Activated CD4-positive, alpha-beta T cell treated with anti-CD3 and anti-CD28 coated beads for 36 hours (primary cell): ENCODE measurements at regions of chr2 and their contacts with region 1.

Region 1: DNA sequence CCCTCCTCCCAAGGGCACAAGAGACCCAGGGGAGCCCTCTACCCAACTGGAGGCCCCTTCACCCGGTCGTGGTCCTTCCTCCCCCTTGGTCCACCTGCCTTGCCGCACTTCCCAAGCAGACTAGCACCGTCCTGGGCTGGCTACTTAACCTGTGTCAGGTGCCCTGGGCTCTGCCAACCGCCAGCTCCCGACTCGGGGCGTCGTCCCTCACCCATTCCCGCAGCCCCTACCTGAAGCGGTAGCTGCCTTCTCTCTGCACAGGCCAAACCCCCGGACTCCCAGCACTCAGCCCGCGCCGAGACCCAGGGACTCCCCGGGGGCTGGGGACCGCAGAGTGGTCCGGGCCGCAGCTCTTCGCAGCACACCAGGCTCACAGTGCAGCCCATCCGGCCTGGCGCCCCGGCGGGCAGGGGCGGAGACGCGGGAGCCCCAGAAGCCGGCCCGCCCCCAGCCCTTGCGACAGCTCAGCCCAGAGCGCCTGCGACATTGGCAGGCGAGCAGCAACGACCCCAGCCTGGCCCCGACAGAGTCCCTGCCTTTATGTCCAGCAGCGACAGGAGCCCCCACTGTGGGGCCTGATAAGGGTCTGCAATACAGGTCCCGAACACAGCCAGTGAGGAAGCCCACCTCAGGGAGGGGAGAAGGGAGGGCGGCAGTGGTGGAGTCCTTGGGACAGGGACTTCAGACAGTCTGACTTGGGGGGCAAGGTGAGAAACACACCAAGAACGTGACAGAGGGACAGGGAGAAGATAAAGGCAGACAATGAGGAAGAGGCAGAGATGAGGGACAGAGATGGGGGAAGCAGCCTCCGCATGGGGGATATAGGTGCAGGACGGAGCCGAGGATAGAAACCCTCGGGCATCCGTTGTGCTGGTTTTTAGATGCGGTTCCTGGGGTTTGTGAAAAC is 31.0 kb upstream of the TNS1 start:
- DNase-seq: no peak
- ATAC-seq: peak; percentile 12
- H3K4me3 Mint-ChIP-seq: peak overlapping the region; percentile 54
- H3K27ac Mint-ChIP-seq: no peak overlapping the region
- H3K4me1 Mint-ChIP-seq: peaks cover 8% of the 10 kb centered on the region
- H3K27me3 Mint-ChIP-seq: peaks cover 2% of the 10 kb centered on the region

Region 2: GRCh38 chr2:217956586-217957457 is 77.0 kb before region 1 on chr2:
- CTCF ChIA-PET with region 1: no interaction called
- POLR2A ChIA-PET with region 1: no interaction called
- intact Hi-C with region 1: no loop called
- DNase-seq: no peak
- ATAC-seq: no peak
- H3K4me3 Mint-ChIP-seq: no peak overlapping the region
- H3K27ac Mint-ChIP-seq: no peak overlapping the region
- H3K4me1 Mint-ChIP-seq: no peaks in the 10 kb centered on the region
- H3K27me3 Mint-ChIP-seq: no peaks in the 10 kb centered on the region

Region 3: GRCh38 chr2:218074031-218074430 is 40.2 kb after region 1 on chr2:
- CTCF ChIA-PET with region 1: interaction called, 3 read pairs
- POLR2A ChIA-PET with region 1: no interaction called
- intact Hi-C with region 1: loop called in 1 of 2 experiments (anchors 2 kb)
- DNase-seq: peak; percentile 59
- ATAC-seq: peak; percentile 64
- H3K4me3 Mint-ChIP-seq: no peak overlapping the region
- H3K27ac Mint-ChIP-seq: no peak overlapping the region
- H3K4me1 Mint-ChIP-seq: peaks cover 4% of the 10 kb centered on the region
- H3K27me3 Mint-ChIP-seq: peaks cover 4% of the 10 kb centered on the region